GM12878 (cell line): ENCODE measurements at regions of chr1 and their contacts with region 1.

Region 1: GRCh38 chr1:168439456-168440375 is 104.1 kb downstream of the XCL2 start:
- DNase-seq: peak; percentile 45
- ATAC-seq: peak; percentile 97
- H3K4me3 ChIP-seq: no peak overlapping the region
- H3K27ac ChIP-seq: no peak overlapping the region
- H3K4me1 ChIP-seq: no peaks in the 10 kb centered on the region
- H3K27me3 ChIP-seq: no peaks in the 10 kb centered on the region; a peak in 1 of 4 replicates
- CTCF ChIP-seq: peak; percentile 66 to 84 (median 73)
- EP300 ChIP-seq: no peak
- POLR2A ChIP-seq: no peak
- RAD21 ChIP-seq: peak; percentile 93

Region 2: GRCh38 chr1:168421399-168422004 is 18.2 kb before region 1 on chr1:
- CTCF ChIA-PET with region 1: interaction called, 5 read pairs
- POLR2A ChIA-PET with region 1: interaction called, 3 read pairs
- RAD21 ChIA-PET with region 1: interaction called, 6 read pairs
- SMC1A ChIA-PET with region 1: interaction called, 51 read pairs
- in situ Hi-C with region 1: no loop called
- intact Hi-C with region 1: no loop called
- DNase-seq: no peak
- ATAC-seq: peak; percentile 74
- H3K4me3 ChIP-seq: no peak overlapping the region
- H3K27ac ChIP-seq: no peak overlapping the region
- H3K4me1 ChIP-seq: no peaks in the 10 kb centered on the region
- H3K27me3 ChIP-seq: no peaks in the 10 kb centered on the region; a peak in 2 of 4 replicates
- CTCF ChIP-seq: no peak
- EP300 ChIP-seq: no peak
- POLR2A ChIP-seq: no peak
- RAD21 ChIP-seq: no peak

Region 3: DNA sequence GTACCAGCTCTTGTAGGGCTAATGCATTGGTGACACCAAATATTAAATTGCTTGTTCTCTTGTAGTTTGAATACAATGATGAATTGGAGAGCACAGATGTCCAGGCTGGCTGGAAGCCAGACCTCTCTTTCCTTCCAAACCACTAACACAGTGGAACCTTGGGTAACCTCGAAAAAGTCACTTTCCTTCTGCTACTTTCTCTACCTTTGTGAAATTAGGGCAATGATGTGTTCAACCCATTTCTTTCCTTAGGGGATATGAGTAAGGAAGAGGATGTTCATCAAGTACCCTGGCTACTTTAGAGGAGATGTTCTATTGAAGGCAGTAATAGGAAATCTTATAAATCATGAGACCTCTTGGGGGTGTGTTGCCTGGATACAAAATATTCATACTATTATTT is 48.4 kb after region 1 on chr1:
- CTCF ChIA-PET with region 1: interaction called, 4 read pairs
- POLR2A ChIA-PET with region 1: no interaction called
- RAD21 ChIA-PET with region 1: interaction called, 10 read pairs
- SMC1A ChIA-PET with region 1: interaction called, 4 read pairs
- in situ Hi-C with region 1: no loop called
- intact Hi-C with region 1: no loop called
- DNase-seq: no peak
- ATAC-seq: no peak
- H3K4me3 ChIP-seq: no peak overlapping the region
- H3K27ac ChIP-seq: no peak overlapping the region
- H3K4me1 ChIP-seq: no peaks in the 10 kb centered on the region
- H3K27me3 ChIP-seq: no peaks in the 10 kb centered on the region
- CTCF ChIP-seq: no peak
- EP300 ChIP-seq: no peak
- POLR2A ChIP-seq: no peak
- RAD21 ChIP-seq: no peak

Region 4: GRCh38 chr1:168535536-168535935 is 95.8 kb after region 1 on chr1:
- CTCF ChIA-PET with region 1: interaction called, 7 read pairs
- POLR2A ChIA-PET with region 1: no interaction called
- RAD21 ChIA-PET with region 1: interaction called, 4 read pairs
- SMC1A ChIA-PET with region 1: interaction called, 18 read pairs
- in situ Hi-C with region 1: no loop called
- intact Hi-C with region 1: no loop called
- DNase-seq: no peak
- ATAC-seq: peak; percentile 94
- H3K4me3 ChIP-seq: no peak overlapping the region
- H3K27ac ChIP-seq: no peak overlapping the region
- H3K4me1 ChIP-seq: no peaks in the 10 kb centered on the region
- H3K27me3 ChIP-seq: no peaks in the 10 kb centered on the region
- CTCF ChIP-seq: no peak
- EP300 ChIP-seq: no peak
- POLR2A ChIP-seq: no peak
- RAD21 ChIP-seq: no peak

Region 5: GRCh38 chr1:168572633-168573032 is 132.9 kb after region 1 on chr1:
- CTCF ChIA-PET with region 1: interaction called, 11 read pairs
- POLR2A ChIA-PET with region 1: no interaction called
- RAD21 ChIA-PET with region 1: interaction called, 8 read pairs
- SMC1A ChIA-PET with region 1: interaction called, 49 read pairs
- in situ Hi-C with region 1: loop called (anchors 5 kb)
- intact Hi-C with region 1: loop called (anchors 1 kb)
- DNase-seq: no peak
- ATAC-seq: peak; percentile 63
- H3K4me3 ChIP-seq: no peak overlapping the region
- H3K27ac ChIP-seq: no peak overlapping the region
- H3K4me1 ChIP-seq: no peaks in the 10 kb centered on the region
- H3K27me3 ChIP-seq: peaks cover 0 to 2% of the 10 kb centered on the region in 2 experiments; a peak in 1 of 4 replicates
- CTCF ChIP-seq: no peak
- EP300 ChIP-seq: no peak
- POLR2A ChIP-seq: no peak
- RAD21 ChIP-seq: no peak

Region 6: GRCh38 chr1:169012416-169012815 is 572.7 kb after region 1 on chr1:
- CTCF ChIA-PET with region 1: no interaction called
- POLR2A ChIA-PET with region 1: no interaction called
- RAD21 ChIA-PET with region 1: no interaction called
- SMC1A ChIA-PET with region 1: interaction called, 12 read pairs
- in situ Hi-C with region 1: no loop called
- intact Hi-C with region 1: no loop called
- DNase-seq: peak; percentile 73
- ATAC-seq: peak; percentile 82
- H3K4me3 ChIP-seq: no peak overlapping the region
- H3K27ac ChIP-seq: peak overlapping the region; percentile 54
- H3K4me1 ChIP-seq: peaks cover 21% of the 10 kb centered on the region
- H3K27me3 ChIP-seq: no peaks in the 10 kb centered on the region
- CTCF ChIP-seq: no peak
- EP300 ChIP-seq: peak; percentile 43 to 86; a peak in 2 of 4 replicates
- POLR2A ChIP-seq: no peak
- RAD21 ChIP-seq: no peak

Region 7: DNA sequence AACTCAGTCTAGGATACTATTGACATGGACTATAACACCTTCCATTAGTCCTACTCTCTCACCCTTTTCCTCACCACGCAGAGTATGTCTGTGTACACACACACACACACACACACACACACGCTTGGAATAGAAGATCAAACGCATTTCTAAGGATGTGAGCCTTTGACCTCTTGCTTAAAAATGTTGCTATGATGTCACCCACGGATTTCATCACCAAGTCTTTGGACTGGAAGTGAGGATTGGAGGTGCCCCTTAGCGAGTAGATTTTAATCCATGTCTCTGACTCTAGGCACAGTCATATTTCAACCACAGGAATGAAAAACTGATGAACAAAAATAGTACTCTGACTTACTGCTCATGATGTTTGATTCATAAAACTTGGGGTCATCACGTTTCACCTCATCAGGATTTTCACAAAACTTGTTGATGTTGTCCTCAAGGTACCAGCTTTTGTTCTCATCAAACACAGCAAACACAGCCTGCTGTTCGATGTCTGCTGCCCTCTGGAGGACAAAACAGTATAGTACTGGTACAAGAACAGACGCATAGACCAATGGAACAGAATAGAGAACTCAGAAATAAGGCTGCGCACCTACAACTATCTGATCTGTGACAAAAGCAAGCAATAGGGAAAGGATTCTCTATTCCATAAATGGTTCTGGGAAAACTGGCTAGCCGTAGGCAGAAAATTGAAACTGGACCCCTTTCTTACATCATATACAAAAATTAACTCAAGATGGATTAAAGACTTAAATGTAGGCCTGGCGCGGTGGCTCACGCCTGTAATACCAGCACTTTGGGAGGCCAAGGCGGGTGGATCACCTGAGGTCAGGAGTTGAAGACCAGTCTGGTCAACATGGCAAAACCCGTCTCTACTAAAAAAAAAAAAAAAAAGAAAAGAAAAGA is 1106.6 kb after region 1 on chr1:
- CTCF ChIA-PET with region 1: interaction called, 4 read pairs
- POLR2A ChIA-PET with region 1: no interaction called
- RAD21 ChIA-PET with region 1: no interaction called
- SMC1A ChIA-PET with region 1: interaction called, 4 read pairs
- in situ Hi-C with region 1: loop called (anchors 10 kb)
- intact Hi-C with region 1: no loop called
- DNase-seq: peak; percentile 40
- ATAC-seq: peak; percentile 92
- H3K4me3 ChIP-seq: no peak overlapping the region
- H3K27ac ChIP-seq: no peak overlapping the region
- H3K4me1 ChIP-seq: no peaks in the 10 kb centered on the region
- H3K27me3 ChIP-seq: no peaks in the 10 kb centered on the region
- CTCF ChIP-seq: peak; percentile 63 to 69 (median 66)
- EP300 ChIP-seq: no peak
- POLR2A ChIP-seq: no peak
- RAD21 ChIP-seq: peak; percentile 75